AG04449 (cell line): ENCODE measurements at regions of chr2 and their contacts with region 1.

Region 1: DNA sequence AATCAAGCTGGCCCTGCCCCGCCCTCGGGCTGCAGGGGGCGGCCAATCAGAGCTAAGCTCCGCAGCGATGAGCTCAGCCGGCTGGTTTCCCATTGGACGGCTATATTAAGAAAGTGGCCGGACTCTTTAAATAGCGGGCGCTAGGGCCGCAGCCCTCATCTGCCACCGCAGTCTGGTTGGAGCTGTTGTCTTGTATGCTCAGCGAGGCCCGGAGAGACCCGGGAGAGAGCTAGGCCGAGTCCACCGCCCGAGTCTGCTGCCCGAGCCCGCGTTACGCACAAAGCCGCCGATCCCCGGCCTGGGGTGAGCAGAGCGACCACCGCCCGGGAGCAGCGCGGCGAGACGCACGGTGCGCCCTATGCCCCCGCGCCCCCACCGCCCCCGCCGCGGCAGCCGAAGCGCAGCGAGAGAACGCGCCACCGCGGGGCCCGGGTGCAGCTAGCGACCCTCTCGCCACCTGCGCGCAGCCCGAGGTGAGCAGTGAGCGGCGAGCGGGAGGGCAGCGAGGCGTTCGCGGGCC is at the start of gene RHOB:
- DNase-seq: peak; percentile 90
- H3K4me3 ChIP-seq: peak within 1 kb of the TSS; percentile 89
- CTCF ChIP-seq: no peak

Region 2: DNA sequence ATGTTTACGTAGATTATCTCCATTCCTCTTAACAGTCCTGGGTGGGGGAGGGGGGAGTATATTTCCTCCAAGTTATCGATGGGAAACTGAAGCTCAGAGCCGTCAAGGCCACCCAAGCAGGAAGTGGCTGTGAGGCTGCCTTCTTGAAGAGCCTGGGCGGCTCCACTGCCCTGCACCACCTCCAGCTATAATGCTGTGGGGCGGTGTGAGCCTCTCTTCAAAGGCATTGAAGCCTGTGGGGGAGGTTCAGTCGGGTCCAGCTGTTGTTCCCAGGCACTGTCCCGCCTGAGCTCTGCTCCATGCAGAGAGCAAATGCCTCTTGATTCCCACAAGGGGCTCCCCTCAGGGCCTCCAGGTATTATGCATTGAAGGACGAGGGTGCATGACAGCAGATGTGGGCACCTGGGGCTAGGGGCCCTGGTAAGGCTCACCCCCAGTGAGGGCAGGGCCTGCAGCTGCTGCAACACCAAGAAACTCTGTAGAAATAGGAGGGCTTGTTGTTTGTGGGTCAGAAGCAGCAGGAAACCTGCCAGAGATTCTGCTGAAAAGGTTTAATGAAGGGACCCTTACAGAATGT is 366.1 kb before region 1 on chr2:
- CTCF ChIA-PET with region 1: no interaction called
- POLR2A ChIA-PET with region 1: no interaction called
- DNase-seq: no peak
- H3K4me3 ChIP-seq: no peak overlapping the region
- CTCF ChIP-seq: no peak

Region 3: GRCh38 chr2:20411361-20411894 is 35.5 kb before region 1 on chr2:
- CTCF ChIA-PET with region 1: interaction called, 77 read pairs
- POLR2A ChIA-PET with region 1: interaction called, 31 read pairs
- DNase-seq: no peak
- H3K4me3 ChIP-seq: no peak overlapping the region
- CTCF ChIP-seq: peak; percentile 86

Region 4: DNA sequence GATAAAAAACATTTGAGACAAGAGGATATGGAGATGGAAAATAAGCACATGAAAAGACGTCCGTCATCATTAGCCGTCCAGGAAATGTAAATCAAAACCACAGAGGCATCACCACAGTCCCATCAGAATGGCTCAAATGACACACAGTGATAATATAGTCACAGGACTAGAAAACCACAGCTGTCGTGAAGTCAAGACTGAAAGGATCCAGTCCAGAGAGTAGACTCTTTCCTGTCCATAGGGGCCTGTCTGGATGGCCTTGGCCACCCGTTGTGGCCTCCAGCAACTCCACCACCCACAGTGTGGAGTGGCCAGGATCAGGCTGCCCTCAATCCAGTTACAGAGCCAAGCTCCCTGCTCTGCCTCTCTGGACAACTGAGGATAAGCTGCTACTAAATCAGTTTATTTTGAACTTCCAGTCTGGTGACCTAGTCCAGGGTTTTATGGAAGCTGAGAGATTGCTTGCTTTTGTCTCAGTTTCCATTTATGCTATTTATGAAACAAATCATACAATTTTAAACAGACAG is 60.3 kb after region 1 on chr2:
- CTCF ChIA-PET with region 1: no interaction called
- POLR2A ChIA-PET with region 1: interaction called, 12 read pairs
- DNase-seq: no peak
- H3K4me3 ChIP-seq: no peak overlapping the region
- CTCF ChIP-seq: no peak

Region 5: GRCh38 chr2:20578895-20579825 is 132.2 kb after region 1 on chr2:
- CTCF ChIA-PET with region 1: no interaction called
- POLR2A ChIA-PET with region 1: interaction called, 39 read pairs
- DNase-seq: peak; percentile 93
- H3K4me3 ChIP-seq: no peak overlapping the region
- CTCF ChIP-seq: no peak

Region 6: GRCh38 chr2:20600756-20601325 is 153.9 kb after region 1 on chr2:
- CTCF ChIA-PET with region 1: interaction called, 21 read pairs
- POLR2A ChIA-PET with region 1: interaction called, 33 read pairs
- DNase-seq: no peak
- H3K4me3 ChIP-seq: no peak overlapping the region
- CTCF ChIP-seq: no peak

Region 7: GRCh38 chr2:20635675-20636584 is 189.0 kb after region 1 on chr2:
- CTCF ChIA-PET with region 1: interaction called, 394 read pairs
- POLR2A ChIA-PET with region 1: interaction called, 107 read pairs
- DNase-seq: no peak
- H3K4me3 ChIP-seq: no peak overlapping the region; the same call in 1 of the 2 replicates
- CTCF ChIP-seq: peak; percentile 99

Region 8: GRCh38 chr2:20666304-20667150 is 219.6 kb after region 1 on chr2 and contains the start of gene GDF7:
- CTCF ChIA-PET with region 1: no interaction called
- POLR2A ChIA-PET with region 1: no interaction called
- DNase-seq: no peak
- H3K4me3 ChIP-seq: peak within 1 kb of the TSS; percentile 34
- CTCF ChIP-seq: no peak